Activated T-helper 1 cell treated with anti-CD3 and anti-CD28 coated beads, Interleukin-12 subunit alpha, Interleukin-12 subunit beta, Interleukin-2, Interleukin-4 antibody, amounts not matched to agents 30 ng/mL and 10 ng/mL and 1 ng/mL, durations not matched to agents 14 hours and 24 hours and 36 hours (primary cell): ENCODE measurements at regions of chr9 and their contacts with region 1.

Region 1: GRCh38 chr9:124868511-124869465 is 6.9 kb downstream of the ARPC5L start:
- DNase-seq: peak; percentile 93
- H3K4me3 Mint-ChIP-seq: peak overlapping the region; percentile 99
- H3K27ac Mint-ChIP-seq: peak overlapping the region; percentile 100
- H3K4me1 Mint-ChIP-seq: peaks cover 56% of the 10 kb centered on the region
- H3K27me3 Mint-ChIP-seq: peaks cover 1% of the 10 kb centered on the region

Region 2: DNA sequence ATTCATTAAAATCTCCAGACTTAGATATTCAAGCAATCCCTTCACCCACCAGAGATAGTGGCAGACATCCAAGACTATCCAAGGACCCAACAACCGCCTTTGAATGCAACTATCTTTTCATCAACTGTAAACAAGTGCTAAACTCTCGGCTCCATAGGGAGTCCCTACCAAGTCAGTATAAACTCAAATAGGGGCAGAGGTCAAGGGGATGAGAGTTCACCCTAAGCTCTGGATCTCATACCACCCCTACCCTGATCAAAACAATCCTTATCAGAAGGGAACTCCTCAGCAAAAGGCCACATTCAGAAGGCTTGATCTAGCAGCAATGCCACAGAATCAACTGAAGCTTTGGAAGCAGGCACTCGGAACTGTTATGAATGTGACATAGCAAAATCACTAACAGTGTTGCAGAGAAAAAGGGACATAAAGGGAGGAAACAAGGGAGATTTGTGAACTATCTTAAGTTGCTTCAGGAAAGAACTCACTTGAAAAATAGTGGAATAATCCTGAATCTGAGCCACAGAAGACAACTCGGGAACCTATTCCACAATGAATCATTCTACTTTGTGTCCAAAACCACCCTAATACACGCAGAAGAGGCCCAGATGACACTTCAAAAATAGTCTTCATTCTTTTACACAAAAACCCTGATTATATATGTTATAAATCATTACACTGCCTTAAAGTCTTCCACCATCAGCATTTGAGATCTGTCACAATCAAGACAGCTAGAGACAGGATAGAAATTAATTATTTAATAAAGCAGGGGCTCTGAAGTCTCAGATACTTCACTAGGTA is 147.5 kb before region 1 on chr9:
- intact Hi-C with region 1: no loop called
- DNase-seq: no peak
- H3K4me3 Mint-ChIP-seq: no peak overlapping the region
- H3K27ac Mint-ChIP-seq: no peak overlapping the region
- H3K4me1 Mint-ChIP-seq: peaks cover under 1% of the 10 kb centered on the region
- H3K27me3 Mint-ChIP-seq: peaks cover 3% of the 10 kb centered on the region

Region 3: DNA sequence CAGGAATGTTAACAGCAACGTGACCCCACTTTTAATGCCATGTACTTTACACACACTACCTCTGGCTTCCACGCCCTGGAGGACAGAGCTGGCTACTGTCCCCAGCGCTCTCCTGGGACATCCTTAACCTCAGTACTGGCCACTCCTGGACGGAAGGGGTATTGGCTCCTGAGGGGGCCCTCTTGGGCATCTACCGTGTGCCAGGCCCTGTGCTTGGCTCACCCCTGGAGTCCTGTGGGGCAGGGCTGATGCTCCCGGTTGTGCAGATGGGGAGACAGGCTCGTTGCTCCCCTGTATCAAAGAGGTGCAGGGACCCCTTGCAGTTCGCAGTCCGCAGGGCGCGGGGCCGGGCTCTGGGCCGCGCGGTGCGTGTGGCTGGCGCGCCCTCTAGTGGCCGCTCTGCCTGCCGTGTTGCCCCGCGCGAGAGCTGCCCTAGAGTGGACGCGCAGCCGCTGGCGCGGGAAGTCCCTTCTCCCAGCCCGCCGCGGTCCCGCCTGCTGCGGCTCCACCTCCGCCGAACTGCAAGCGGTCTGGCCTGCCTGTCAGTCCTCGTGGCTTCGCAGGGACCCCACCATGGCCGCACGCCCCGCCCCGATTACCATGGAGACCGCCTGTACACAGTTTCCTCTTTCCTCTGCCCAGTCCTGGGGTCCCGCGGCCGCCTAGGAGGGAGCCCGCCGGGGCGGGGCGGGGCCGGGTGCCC is 15.8 kb before region 1 on chr9 and contains the start of gene WDR38:
- intact Hi-C with region 1: loop called (anchors 1 kb)
- DNase-seq: peak; percentile 79
- H3K4me3 Mint-ChIP-seq: peak within 1 kb of the TSS; percentile 68
- H3K27ac Mint-ChIP-seq: no peak within 1 kb of the TSS
- H3K4me1 Mint-ChIP-seq: peaks cover 16% of the 10 kb centered on the region
- H3K27me3 Mint-ChIP-seq: peaks cover 9% of the 10 kb centered on the region
- total RNA-seq, gene WDR38: not detected in 2 replicates

Region 4: DNA sequence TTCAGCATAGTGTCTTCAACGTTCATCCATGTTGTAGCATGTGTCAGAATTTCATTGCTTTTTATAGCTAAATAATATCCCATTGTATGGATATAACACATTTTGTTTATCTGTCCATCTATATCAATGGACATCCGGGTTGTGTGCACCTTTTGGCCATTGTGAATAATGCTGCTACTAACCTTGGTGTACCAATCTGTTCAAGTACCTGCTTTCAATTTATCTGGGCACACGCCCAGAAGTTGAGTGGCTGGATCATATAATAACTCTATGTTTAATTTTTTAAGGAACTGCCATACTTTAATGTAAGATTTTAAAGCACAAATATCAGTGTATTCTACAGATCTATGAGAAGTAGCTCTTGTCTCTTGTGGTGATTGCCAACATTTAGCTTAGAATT is 231.0 kb after region 1 on chr9:
- intact Hi-C with region 1: no loop called
- DNase-seq: no peak
- H3K4me3 Mint-ChIP-seq: no peak overlapping the region
- H3K27ac Mint-ChIP-seq: no peak overlapping the region
- H3K4me1 Mint-ChIP-seq: peaks cover 5% of the 10 kb centered on the region
- H3K27me3 Mint-ChIP-seq: no peaks in the 10 kb centered on the region

Region 5: GRCh38 chr9:125214186-125214585 is 345.4 kb after region 1 on chr9:
- intact Hi-C with region 1: no loop called
- DNase-seq: no peak
- H3K4me3 Mint-ChIP-seq: no peak overlapping the region
- H3K27ac Mint-ChIP-seq: no peak overlapping the region
- H3K4me1 Mint-ChIP-seq: no peaks in the 10 kb centered on the region
- H3K27me3 Mint-ChIP-seq: no peaks in the 10 kb centered on the region